H1 (cell line): ENCODE measurements at regions of chr4 and their contacts with region 1.

Region 1: DNA sequence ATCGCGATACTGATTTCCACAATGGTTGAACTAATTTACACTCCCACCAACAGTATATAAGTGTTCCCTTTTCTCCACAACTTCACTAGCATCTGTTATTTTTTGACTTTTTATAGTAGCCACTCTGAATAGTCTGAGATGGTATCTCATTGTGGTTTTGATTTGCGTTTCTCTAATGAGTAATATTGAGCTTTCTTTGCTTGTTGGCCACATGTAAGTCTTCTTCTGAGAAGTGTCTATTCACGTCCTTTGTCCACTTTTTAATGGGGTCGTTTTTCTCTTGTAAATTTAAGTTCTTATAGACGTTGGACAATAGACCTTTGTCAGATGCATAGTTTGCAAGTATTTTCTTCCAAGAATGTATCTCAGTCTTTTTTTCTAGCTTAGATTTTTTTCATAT is 10.0 kb downstream of the FBXW7 start:
- DNase-seq: no peak
- H3K4me3 ChIP-seq: no peak overlapping the region
- H3K27ac ChIP-seq: no peak overlapping the region
- H3K4me1 ChIP-seq: no peaks in the 10 kb centered on the region; a peak in 1 of 7 replicates
- H3K27me3 ChIP-seq: no peaks in the 10 kb centered on the region
- CTCF ChIP-seq: no peak
- EP300 ChIP-seq: no peak
- POLR2A ChIP-seq: no peak
- RAD21 ChIP-seq: no peak

Region 2: DNA sequence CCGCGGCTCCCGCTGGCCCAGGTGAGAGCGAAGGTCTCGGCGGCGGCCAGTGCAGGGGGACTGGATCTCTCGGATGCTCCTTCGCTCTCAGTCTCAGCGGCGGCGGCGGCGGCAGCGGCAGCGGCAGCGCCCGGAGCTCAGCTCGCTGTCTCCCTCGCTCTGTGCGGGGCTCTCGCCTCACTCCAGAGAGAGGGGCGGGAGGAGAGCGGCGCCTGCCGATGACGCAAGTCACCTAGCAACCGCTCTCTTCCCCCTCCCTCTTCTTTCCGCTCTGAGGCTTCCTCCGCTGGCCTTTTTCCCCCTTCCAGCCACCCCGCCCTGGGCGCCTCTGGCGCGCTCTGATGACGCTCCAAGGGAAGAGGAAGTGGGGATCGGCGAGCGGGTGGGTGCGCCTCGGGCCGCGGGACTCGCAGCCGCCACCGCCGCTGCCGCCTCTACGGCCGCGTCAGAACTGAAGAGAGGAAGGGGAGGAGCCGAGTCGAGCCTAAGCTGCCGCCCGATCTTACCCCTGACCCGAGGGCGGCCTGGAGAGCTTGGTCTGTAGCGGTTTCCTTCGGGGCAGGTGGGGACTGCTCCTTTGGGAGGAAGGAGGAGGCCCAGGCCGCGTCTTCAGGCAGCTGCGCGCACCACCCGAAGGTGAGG is 10.2 kb after region 1 on chr4 and contains the start of gene FBXW7:
- CTCF ChIA-PET with region 1: interaction called, 12 read pairs
- POLR2A ChIA-PET with region 1: interaction called, 28 read pairs
- DNase-seq: peak; percentile 93 to 99
- H3K4me3 ChIP-seq: peak within 1 kb of the TSS; percentile 84 to 98 (median 92)
- H3K27ac ChIP-seq: peak within 1 kb of the TSS; percentile 90
- H3K4me1 ChIP-seq: peaks cover 0 to 18% (median 6%) of the 10 kb centered on the region in 4 experiments; a peak in 5 of 7 replicates
- H3K27me3 ChIP-seq: no peaks in the 10 kb centered on the region
- CTCF ChIP-seq: no peak
- EP300 ChIP-seq: peak in 1 of 2 experiments; percentile 61; a peak in 1 of 3 replicates
- POLR2A ChIP-seq: peak; percentile 60 to 79
- RAD21 ChIP-seq: peak; percentile 3 to 11; a peak in 1 of 4 replicates
- total RNA-seq, gene FBXW7: 26.7 and 28.9 TPM in 2 replicates

Region 3: DNA sequence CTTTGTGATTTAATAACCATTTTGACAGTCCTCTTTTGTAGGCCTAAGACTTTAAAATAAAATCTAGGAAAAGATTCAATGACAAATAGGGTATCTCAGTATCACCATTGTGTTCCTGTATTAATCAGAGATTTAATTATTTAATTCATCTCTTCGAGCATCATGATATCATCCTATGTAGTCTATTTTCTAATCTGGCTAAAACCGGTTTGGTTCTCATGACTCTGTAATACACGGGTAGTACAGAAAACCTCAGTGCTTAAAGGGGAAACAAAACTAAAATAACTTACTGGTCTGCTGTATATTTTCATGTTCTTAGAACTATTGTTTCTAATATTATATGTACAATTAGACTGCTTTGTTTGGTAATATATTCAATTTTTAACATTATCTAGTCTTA is 33.8 kb after region 1 on chr4:
- CTCF ChIA-PET with region 1: no interaction called
- POLR2A ChIA-PET with region 1: no interaction called
- DNase-seq: no peak
- H3K4me3 ChIP-seq: no peak overlapping the region
- H3K27ac ChIP-seq: no peak overlapping the region
- H3K4me1 ChIP-seq: no peaks in the 10 kb centered on the region
- H3K27me3 ChIP-seq: no peaks in the 10 kb centered on the region
- CTCF ChIP-seq: no peak
- EP300 ChIP-seq: no peak
- POLR2A ChIP-seq: no peak
- RAD21 ChIP-seq: no peak